Cardiac septum (tissue), 1 donor: ENCODE measurements at regions of chrX and their contacts with region 1.

Region 1: GRCh38 chrX:43557792-43558191 is 98.3 kb upstream of the MAOA start:
- DNase-seq: no peak

Region 2: GRCh38 chrX:41796577-41796976 is 1761.2 kb before region 1 on chrX:
- intact Hi-C with region 1: loop called (anchors 5 kb)
- DNase-seq: no peak

Region 3: DNA sequence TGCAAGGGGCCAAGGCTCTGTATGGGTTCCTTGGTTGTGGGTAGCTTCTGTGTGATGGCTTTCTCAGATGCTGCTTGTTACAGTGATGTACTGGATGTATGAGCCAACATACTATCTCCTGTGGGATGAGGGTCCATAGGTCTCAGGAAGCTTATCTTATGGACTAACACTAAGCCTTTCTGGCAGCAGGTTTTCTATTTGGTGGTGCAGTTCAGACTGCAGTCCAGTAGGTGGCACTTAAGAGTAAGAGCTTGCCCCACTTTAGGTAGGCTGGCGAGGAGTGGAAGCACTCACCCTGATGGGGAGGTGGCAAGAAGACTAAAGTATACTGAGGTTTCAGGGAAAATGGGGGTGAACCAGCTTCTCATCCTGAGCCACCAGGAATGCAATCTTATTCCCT is 208.4 kb before region 1 on chrX:
- intact Hi-C with region 1: loop called (anchors 5 kb)
- DNase-seq: no peak

Region 4: DNA sequence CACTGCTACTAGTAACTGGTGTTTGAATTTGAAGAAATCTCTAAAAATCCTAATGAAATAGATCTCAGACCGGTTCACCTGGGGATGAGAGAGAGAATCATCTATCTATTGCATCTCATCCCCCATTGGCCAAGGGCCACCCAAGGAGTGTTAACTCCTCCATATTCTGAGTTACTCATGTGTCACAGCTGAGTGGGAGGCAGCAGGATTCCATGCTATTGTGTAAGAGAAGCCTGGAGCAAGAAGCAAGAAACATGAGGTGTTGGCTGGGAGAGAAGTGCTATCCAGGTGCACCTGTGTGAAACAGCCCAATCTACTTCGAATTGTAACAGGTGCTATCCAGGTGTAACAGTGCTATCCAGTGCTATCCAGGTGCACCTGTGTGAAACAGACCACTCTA is 52.0 kb before region 1 on chrX:
- intact Hi-C with region 1: no loop called
- DNase-seq: no peak

Region 5: DNA sequence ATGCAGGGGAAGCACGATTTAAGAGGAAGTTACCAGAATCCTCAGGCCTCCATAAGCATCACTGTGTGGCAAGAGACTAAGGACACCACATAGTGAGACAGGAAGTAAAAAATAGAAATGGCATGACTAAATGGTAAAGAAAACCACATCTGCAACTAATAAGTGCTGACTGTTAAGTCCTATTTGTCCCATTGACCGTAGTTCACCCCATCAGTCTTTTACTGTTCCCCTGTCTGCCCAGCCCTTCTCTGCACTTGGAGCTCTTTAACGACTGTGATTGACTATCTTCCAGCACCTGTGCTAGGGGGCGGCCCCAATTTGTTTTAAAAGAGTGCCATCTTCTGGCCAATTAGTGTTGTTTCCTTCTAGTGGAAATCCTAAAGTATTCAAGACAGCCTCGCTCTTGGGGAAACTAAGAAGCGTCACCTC is 192.5 kb after region 1 on chrX:
- intact Hi-C with region 1: loop called (anchors 1 kb)
- DNase-seq: no peak

Region 6: GRCh38 chrX:43939187-43939926 is 381.6 kb after region 1 on chrX:
- intact Hi-C with region 1: loop called (anchors 10 kb)
- DNase-seq: no peak